Activated CD4-positive, alpha-beta memory T cell treated with anti-CD3 and anti-CD28 coated beads for 36 hours (primary cell): ENCODE measurements at regions of chr17 and their contacts with region 1.

Region 1: DNA sequence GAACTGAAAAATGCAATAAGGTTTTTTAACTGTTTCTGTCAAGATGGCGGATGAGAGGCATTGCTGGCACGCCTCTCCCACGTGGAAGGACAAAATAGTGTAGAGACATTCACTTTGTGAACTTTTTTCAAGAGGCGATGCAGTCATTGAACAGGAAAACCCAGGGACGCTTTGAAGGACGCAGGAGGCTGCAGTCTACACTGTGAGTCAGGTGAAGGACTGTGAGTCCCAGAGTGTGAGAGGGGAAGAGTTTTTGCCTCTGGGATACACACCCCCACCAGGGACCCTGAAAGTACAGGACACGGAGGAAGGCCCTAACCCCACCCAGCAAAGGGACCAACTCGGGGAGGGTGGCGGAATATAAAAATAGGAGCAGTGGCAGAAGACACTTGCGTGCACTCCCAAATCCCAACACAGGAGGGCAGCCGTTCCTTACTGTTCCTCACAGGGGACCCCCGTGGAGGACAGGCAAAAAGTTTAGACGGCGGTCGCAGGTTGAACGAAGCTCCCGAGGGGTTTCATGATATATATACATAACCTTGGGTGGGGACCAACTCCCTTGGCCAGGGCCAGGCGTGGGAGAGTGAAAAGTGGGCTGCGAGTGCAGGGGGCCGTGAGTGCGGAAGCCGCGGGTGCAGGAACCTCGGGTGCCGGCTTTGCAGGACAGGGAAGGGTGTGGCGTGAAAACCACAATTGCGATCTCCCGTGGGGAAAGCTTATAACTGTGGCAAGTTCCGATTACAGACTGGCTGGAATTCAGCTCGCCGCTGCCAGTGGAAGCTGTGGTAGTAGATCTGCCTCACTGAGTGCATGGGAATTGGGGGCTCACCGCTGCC is 82.0 kb upstream of the ALOX12 start:
- DNase-seq: peak; percentile 82
- H3K4me3 Mint-ChIP-seq: peak overlapping the region; percentile 53
- H3K27ac Mint-ChIP-seq: no peak overlapping the region
- H3K4me1 Mint-ChIP-seq: peaks cover 16% of the 10 kb centered on the region
- H3K27me3 Mint-ChIP-seq: peaks cover 16% of the 10 kb centered on the region

Region 2: DNA sequence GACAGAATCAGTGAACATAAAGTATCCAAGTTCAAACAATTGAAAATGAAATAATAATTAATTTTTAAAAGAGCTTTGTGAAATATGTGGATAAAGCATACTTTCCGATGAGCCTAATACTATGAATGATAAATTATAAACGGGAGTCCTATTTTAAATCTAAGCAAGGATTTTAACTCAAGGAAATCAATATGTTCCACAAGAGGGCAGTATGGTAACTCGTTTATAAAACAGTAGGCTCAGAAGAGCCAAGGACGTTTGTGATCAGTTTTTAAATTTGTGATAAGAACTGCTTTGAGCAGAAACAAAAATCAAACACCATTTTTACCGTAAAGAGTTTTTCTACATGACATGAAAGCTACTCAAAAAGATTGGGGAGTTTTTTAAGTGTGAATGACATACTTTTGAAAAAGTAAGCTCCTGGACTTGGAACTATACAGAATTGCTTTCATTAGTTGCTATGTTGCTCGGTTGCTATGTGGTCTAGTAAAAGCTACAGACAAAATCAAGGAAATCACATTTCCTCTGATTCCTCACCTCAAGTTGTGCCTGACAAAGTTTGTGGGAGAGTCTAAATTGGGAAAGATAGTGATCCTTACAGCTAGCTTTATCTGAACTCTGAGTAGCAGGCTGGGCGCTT is 70.5 kb before region 1 on chr17:
- CTCF ChIA-PET with region 1: interaction called, 17 read pairs
- POLR2A ChIA-PET with region 1: no interaction called
- intact Hi-C with region 1: loop called (anchors 2 kb)
- DNase-seq: no peak
- H3K4me3 Mint-ChIP-seq: no peak overlapping the region
- H3K27ac Mint-ChIP-seq: no peak overlapping the region
- H3K4me1 Mint-ChIP-seq: no peaks in the 10 kb centered on the region
- H3K27me3 Mint-ChIP-seq: peaks cover 30% of the 10 kb centered on the region

Region 3: DNA sequence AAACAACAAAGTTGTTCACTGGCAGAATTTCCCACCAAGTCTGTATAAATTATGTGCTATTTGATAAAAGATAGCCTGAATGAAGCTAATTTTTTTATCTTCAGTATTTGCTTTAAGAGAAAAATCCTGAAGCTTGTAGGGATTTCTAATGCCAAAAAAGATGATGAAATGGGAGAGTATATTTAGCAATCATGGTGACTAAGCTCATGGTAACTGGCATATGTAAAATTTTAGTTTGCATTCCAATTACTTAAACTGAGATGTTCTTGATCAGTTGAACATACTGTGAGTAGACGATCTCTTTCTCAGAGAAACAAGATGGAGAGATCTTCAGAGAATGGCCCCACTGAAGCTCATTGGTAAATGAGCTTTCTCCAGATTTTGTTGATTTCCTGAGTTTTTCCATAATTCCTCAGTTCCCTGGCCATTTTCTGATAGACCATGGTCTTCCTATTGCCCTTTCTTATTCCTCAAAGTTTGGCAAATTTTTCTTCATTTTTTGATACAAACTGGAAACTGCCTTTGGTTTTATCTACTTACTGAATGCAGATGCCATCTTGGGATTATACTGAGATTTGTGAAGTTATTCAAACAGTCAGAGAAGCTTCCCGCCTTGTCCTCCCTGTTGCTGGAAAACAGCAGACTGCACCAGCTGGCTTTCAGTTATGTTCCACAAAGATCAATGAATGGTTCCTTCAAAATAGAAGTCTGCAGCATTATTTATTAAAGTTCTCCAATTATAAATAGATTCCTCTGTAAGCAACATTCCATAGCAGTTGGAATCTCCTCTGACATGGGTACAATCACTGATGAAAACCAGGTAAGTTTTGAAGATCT is 13.7 kb after region 1 on chr17:
- CTCF ChIA-PET with region 1: interaction called, 11 read pairs
- POLR2A ChIA-PET with region 1: no interaction called
- intact Hi-C with region 1: no loop called
- DNase-seq: no peak
- H3K4me3 Mint-ChIP-seq: no peak overlapping the region
- H3K27ac Mint-ChIP-seq: no peak overlapping the region
- H3K4me1 Mint-ChIP-seq: peaks cover 13% of the 10 kb centered on the region
- H3K27me3 Mint-ChIP-seq: no peaks in the 10 kb centered on the region

Region 4: DNA sequence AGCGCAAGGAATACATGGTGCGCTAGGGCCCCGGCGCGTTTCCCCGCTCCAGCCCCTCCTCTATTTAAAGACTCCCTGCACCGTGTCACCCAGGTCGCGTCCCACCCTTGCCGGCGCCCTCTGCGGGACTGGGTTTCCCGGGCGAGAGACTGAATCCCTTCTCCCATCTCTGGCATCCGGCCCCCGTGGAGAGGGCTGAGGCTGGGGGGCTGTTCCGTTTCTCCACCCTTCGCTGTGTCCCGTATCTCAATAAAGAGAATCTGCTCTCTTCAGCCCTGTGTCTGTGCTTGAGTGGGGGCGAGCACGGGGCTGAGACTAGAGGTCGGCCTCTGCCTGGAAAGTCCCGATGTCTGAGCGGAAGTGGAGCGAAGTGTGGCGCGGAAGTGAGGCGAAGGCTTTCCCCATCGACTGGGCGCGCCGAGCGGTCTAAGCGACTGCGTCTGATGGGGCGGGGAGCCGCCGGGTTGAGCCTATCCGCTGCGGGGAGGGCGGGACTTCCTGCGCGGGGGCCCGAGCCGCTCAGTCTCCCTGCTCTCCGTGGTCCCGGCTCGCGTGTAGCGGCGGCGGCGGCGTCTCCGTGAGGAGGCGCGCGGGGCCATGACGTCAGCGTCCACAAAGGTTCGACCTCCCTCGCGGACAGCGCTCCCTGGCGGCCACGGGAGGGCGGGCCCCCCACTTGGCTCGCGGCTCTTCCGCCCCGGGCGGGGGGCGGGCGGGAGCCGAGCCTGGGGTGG is 100.6 kb after region 1 on chr17:
- CTCF ChIA-PET with region 1: interaction called, 257 read pairs
- POLR2A ChIA-PET with region 1: interaction called, 3 read pairs
- intact Hi-C with region 1: no loop called
- DNase-seq: peak; percentile 99
- H3K4me3 Mint-ChIP-seq: peak overlapping the region; percentile 96
- H3K27ac Mint-ChIP-seq: peak overlapping the region; percentile 99
- H3K4me1 Mint-ChIP-seq: peaks cover 58% of the 10 kb centered on the region
- H3K27me3 Mint-ChIP-seq: no peaks in the 10 kb centered on the region

Region 5: DNA sequence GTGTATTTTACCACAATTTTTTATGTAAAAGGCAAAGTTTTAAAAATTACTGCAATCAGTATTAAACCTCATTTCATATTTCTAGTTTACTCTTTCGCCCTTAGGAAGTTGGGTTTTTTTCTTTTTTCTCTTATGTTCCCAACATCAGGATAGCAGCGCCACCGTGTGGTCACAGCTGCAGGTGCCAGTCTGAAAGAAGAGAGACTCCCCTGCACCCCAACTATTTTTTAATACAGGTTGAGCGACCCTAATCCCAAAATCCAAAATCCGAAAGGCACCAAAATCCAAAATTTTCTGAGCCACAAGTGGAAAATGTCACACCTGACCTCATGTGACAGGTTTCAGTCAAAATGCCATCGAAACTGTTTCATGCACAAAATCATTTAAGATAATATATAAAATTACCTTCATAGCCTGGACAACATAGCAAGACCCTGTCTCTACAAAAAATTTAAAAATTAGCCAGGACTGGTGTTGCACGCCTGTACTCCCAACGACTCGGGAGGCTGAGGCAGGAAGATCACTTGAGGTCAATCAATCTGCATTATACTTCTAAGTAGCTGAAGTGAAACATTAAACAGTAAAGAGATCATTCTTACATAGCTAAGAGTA is 222.5 kb after region 1 on chr17:
- CTCF ChIA-PET with region 1: interaction called, 7 read pairs
- POLR2A ChIA-PET with region 1: no interaction called
- intact Hi-C with region 1: loop called (anchors 2 kb)
- DNase-seq: peak; percentile 82
- H3K4me3 Mint-ChIP-seq: no peak overlapping the region
- H3K27ac Mint-ChIP-seq: no peak overlapping the region
- H3K4me1 Mint-ChIP-seq: peaks cover 17% of the 10 kb centered on the region
- H3K27me3 Mint-ChIP-seq: peaks cover 9% of the 10 kb centered on the region